Heart right ventricle (tissue), 16 donors: ENCODE measurements at regions of chr1 and their contacts with region 1.

Region 1: DNA sequence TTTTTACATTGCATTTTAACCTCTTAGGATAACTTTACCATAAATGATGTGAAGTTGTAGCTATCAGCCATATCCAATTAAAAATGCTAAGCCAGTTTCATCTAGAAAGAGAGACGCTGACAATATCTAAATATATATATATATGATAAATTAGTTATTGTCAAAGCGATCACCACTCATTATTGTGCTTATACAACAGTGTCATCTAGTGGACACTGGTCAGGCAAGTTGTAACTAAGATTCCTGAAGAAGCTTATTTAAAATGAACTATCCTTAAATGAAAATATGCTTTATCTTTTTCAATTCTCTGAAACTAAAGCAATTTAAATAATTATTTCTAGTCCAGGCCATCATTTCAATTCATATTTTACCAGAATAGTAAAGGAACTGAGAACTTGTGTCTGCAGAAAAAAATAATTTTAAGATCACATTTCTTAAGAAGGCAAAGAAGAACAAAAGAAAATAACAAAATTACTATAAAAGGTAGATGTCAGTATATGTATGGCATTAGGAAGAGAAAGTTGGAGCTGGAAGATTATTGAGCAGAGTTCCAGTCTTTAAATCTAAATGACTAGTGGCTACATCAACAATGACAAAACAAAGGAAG is 193.3 kb upstream of the SNX7 start:
- DNase-seq: no peak
- ATAC-seq: no peak
- H3K4me3 ChIP-seq: no peak overlapping the region
- H3K27ac ChIP-seq: no peak overlapping the region
- H3K4me1 ChIP-seq: no peaks in the 10 kb centered on the region
- H3K27me3 ChIP-seq: peaks cover 0 to 7% (median 0%) of the 10 kb centered on the region in 7 donors
- CTCF ChIP-seq: peak; percentile 38 to 80 (median 69)

Region 2: DNA sequence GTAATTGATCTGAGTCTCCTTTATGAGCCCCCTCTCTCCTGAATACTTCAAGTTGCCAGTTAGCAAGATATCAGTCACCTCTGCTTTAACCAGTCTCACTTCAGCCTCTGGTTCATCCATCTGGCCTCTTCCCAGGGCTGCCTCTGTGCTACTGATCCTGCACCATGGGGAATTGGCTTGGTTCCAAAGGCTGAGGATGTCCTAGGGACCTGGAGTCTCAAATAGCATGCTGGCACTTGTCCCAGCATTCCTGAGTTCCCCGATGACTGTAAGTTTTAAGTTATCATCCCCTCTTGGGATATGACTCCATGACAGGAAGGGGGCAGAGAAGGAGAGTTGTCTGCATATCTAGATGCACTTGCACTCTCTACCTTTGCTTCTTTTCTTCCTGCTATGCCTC is 1494.6 kb before region 1 on chr1:
- intact Hi-C with region 1: loop called in 2 of 10 experiments (anchors 10 kb)
- DNase-seq: peak in 1 of 2 donors; percentile 11
- ATAC-seq: no peak
- H3K4me3 ChIP-seq: no peak overlapping the region
- H3K27ac ChIP-seq: no peak overlapping the region
- H3K4me1 ChIP-seq: no peaks in the 10 kb centered on the region
- H3K27me3 ChIP-seq: peaks cover 0 to 32% (median 8%) of the 10 kb centered on the region in 7 donors
- CTCF ChIP-seq: no peak

Region 3: GRCh38 chr1:98059620-98060019 is 408.6 kb before region 1 on chr1:
- intact Hi-C with region 1: loop called in 1 of 10 experiments (anchors 10 kb)
- DNase-seq: no peak
- ATAC-seq: no peak
- H3K4me3 ChIP-seq: no peak overlapping the region
- H3K27ac ChIP-seq: no peak overlapping the region
- H3K4me1 ChIP-seq: no peaks in the 10 kb centered on the region
- H3K27me3 ChIP-seq: peaks cover 0 to 56% (median 36%) of the 10 kb centered on the region in 7 donors
- CTCF ChIP-seq: no peak